SK-N-SH (cell line): ENCODE measurements at regions of chr1 and their contacts with region 1.

Region 1: GRCh38 chr1:234309598-234310459 is 63.4 kb upstream of the COA6 start:
- DNase-seq: peak; percentile 78
- H3K4me3 ChIP-seq: no peak overlapping the region; a peak in 1 of 4 replicates
- H3K27ac ChIP-seq: no peak overlapping the region; a peak in 1 of 4 replicates
- H3K4me1 ChIP-seq: peaks cover 0 to 13% of the 10 kb centered on the region in 2 experiments; a peak in 2 of 4 replicates
- H3K27me3 ChIP-seq: no peaks in the 10 kb centered on the region
- CTCF ChIP-seq: peak; percentile 98
- EP300 ChIP-seq: no peak
- RAD21 ChIP-seq: peak; percentile 81

Region 2: GRCh38 chr1:234107416-234108021 is 202.3 kb before region 1 on chr1:
- CTCF ChIA-PET with region 1: interaction called, 18 read pairs
- POLR2A ChIA-PET with region 1: no interaction called
- DNase-seq: no peak
- H3K4me3 ChIP-seq: no peak overlapping the region
- H3K27ac ChIP-seq: no peak overlapping the region
- H3K4me1 ChIP-seq: no peaks in the 10 kb centered on the region
- H3K27me3 ChIP-seq: no peaks in the 10 kb centered on the region
- CTCF ChIP-seq: no peak
- EP300 ChIP-seq: no peak
- RAD21 ChIP-seq: no peak

Region 3: DNA sequence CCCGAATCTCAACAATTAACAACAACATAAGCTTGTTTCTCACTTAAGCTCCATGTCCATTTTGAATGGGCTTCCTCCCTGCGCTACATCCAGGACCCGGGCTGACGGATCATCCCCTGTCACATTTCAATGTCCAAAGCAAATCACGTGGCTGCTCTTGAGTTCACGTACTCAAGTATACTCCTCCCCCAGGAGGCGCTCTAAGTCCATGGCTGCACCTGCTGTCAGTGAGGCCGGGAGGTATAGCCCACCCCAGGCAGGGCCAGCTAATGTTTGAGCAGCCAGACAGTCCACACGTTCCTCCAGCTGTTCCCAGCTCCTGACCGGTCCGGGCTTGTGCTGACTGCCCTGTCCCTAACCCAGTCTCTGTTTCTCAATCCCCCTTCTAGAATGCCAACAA is 184.5 kb before region 1 on chr1:
- CTCF ChIA-PET with region 1: interaction called, 20 read pairs
- POLR2A ChIA-PET with region 1: no interaction called
- DNase-seq: peak; percentile 24
- H3K4me3 ChIP-seq: no peak overlapping the region
- H3K27ac ChIP-seq: no peak overlapping the region
- H3K4me1 ChIP-seq: no peaks in the 10 kb centered on the region
- H3K27me3 ChIP-seq: no peaks in the 10 kb centered on the region
- CTCF ChIP-seq: peak; percentile 56
- EP300 ChIP-seq: no peak
- RAD21 ChIP-seq: peak; percentile 61

Region 4: GRCh38 chr1:234163267-234163919 is 146.4 kb before region 1 on chr1:
- CTCF ChIA-PET with region 1: interaction called, 14 read pairs
- POLR2A ChIA-PET with region 1: no interaction called
- DNase-seq: no peak
- H3K4me3 ChIP-seq: no peak overlapping the region
- H3K27ac ChIP-seq: no peak overlapping the region
- H3K4me1 ChIP-seq: no peaks in the 10 kb centered on the region
- H3K27me3 ChIP-seq: no peaks in the 10 kb centered on the region; the same call in 1 of the 2 replicates
- CTCF ChIP-seq: no peak
- EP300 ChIP-seq: no peak
- RAD21 ChIP-seq: no peak

Region 5: DNA sequence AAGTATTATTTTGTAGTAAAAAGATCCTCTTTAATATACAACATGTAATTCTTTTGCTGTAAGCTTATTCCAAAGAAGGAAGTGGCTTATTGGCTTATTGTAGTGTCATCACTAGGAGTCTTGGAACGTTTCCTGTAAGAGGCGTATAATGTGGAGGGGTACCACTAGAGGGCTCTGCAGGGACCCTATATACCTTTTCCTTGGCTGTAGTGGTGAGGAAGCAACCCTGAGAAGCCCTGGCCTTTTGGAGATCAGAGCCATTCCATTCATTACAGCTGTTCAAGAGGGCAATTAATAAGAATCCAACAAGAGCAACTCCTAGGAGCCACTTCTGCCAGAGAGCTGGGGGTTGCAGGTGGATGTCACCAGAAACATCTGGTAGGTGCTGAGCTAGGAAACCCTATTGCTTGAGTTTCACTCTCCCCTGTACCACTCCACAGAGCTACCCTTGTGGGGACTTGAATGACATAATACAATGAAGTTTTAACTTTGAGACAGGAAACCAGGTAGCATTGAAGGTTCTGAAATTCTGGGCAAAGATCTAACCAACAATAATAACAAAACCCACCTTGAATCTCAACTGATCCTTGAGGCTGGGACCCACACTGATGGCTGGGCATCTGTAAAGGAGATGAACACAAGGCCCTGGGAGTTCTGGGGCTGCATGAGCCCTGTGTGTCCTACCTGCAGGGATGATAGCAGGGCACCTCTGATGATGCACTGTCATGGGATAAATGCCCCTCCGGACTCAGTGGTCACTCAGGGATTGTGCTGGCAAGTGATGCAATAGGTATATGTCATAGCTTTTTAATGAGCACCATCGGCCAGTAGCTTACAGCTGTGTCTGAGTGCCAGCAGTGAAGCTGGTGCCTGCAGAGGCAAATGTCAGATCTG is 96.8 kb before region 1 on chr1:
- CTCF ChIA-PET with region 1: interaction called, 190 read pairs
- POLR2A ChIA-PET with region 1: no interaction called
- DNase-seq: peak; percentile 77
- H3K4me3 ChIP-seq: no peak overlapping the region
- H3K27ac ChIP-seq: no peak overlapping the region
- H3K4me1 ChIP-seq: peaks cover 0 to 5% of the 10 kb centered on the region in 2 experiments; a peak in 1 of 4 replicates
- H3K27me3 ChIP-seq: no peaks in the 10 kb centered on the region
- CTCF ChIP-seq: peak; percentile 62
- EP300 ChIP-seq: no peak
- RAD21 ChIP-seq: peak; percentile 72

Region 6: DNA sequence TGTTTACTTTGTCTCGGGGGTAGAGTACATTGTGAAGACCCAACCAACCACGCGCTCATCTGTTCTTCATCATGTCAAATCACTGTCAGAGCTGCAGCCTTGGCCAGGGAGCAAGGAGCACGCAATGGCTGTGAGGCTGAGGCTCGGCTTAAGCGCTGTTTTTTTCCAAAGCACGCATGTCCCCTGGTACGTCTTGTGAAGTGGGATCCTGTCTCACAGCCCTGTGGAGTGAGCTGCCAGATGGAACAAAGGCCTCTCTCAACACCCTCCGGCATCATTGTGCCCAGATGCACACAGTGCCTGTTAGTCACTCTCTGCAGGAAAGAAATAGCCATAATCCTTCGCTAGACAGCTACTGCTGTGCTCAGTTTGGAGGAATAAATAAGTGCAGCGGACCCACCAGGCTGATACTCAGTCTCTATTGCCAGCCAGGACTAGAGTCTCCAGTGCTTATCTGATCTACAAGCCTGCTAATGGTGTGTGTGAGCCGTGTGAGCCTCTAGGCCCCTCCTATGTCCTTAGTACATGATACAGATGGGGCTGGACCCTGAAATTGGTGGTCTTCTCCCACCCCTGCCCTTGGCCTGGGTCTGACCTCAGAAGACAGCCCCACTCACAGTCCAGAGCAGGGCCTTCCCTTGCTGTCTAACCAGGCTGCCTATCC is 27.9 kb before region 1 on chr1:
- CTCF ChIA-PET with region 1: interaction called, 45 read pairs
- POLR2A ChIA-PET with region 1: no interaction called
- DNase-seq: peak; percentile 74
- H3K4me3 ChIP-seq: no peak overlapping the region
- H3K27ac ChIP-seq: peak overlapping the region in 1 of 2 experiments; percentile 86; a peak in 2 of 4 replicates
- H3K4me1 ChIP-seq: peaks cover 0 to 20% of the 10 kb centered on the region in 2 experiments; a peak in 2 of 4 replicates
- H3K27me3 ChIP-seq: no peaks in the 10 kb centered on the region
- CTCF ChIP-seq: no peak
- EP300 ChIP-seq: peak in 1 of 2 experiments; percentile 49; a peak in 1 of 4 replicates
- RAD21 ChIP-seq: peak; percentile 33

Region 7: GRCh38 chr1:234320549-234320948 is 10.7 kb after region 1 on chr1:
- CTCF ChIA-PET with region 1: interaction called, 102 read pairs
- POLR2A ChIA-PET with region 1: no interaction called
- DNase-seq: no peak
- H3K4me3 ChIP-seq: no peak overlapping the region
- H3K27ac ChIP-seq: no peak overlapping the region
- H3K4me1 ChIP-seq: peaks cover 3 to 7% of the 10 kb centered on the region in 2 experiments; a peak in 2 of 4 replicates
- H3K27me3 ChIP-seq: no peaks in the 10 kb centered on the region
- CTCF ChIP-seq: no peak
- EP300 ChIP-seq: no peak
- RAD21 ChIP-seq: no peak

Region 8: GRCh38 chr1:235275223-235275622 is 965.4 kb after region 1 on chr1:
- CTCF ChIA-PET with region 1: no interaction called
- POLR2A ChIA-PET with region 1: no interaction called
- DNase-seq: no peak
- H3K4me3 ChIP-seq: no peak overlapping the region
- H3K27ac ChIP-seq: peak overlapping the region in 1 of 2 experiments; percentile 3; a peak in 1 of 4 replicates
- H3K4me1 ChIP-seq: peaks cover 5 to 14% of the 10 kb centered on the region in 2 experiments; a peak in 3 of 4 replicates
- H3K27me3 ChIP-seq: no peaks in the 10 kb centered on the region
- CTCF ChIP-seq: no peak
- EP300 ChIP-seq: no peak
- RAD21 ChIP-seq: no peak